Activated CD4-positive, alpha-beta memory T cell treated with anti-CD3 and anti-CD28 coated beads, Interleukin-2, amount 10 ng/mL, durations not matched to agents 7 days and 5 days (primary cell): ENCODE measurements at regions of chr20 and their contacts with region 1.

Region 1: DNA sequence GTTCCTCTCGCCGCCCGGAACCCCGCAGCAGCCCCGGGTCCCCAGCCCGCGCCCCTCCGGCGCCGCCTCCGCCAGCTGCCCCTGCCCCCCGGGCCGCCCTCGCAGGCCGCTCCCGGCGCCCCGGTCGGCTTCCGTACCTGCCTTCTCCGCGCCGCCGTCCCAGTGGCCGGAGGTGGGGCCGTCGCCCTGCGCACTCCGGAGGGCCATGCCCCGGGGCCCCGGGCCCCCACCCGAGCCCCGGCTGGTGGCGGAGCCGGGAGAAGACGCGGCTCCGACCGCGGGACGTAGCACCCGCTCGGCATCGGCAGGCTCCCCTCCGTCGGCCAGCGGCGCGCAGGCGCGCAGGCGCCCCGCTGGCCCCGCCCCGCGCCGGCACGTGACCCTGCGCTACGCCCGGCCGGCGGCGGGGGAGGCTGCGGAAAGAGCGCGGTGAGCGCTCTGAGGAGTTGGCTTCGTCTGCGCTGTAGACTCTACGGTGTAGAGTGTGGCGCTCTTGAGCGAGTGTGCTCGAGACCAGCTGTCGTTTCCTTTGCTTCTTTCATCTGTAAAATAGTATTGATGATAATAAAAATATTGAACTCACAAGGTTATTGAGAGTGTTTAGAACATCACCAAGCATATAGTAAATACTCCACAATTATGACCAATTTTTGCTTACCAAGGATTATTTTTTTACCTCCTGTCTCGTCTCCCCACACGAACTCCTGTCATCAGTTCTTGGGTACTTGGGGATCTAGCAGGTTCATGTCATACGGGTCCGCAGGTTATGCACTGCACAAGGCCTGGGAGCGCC is at the start of gene TBC1D20:
- DNase-seq: peak; percentile 88
- H3K4me3 Mint-ChIP-seq: peak within 1 kb of the TSS; percentile 100
- H3K27ac Mint-ChIP-seq: peak within 1 kb of the TSS; percentile 95
- H3K4me1 Mint-ChIP-seq: peaks cover 39% of the 10 kb centered on the region
- H3K27me3 Mint-ChIP-seq: peaks cover 4% of the 10 kb centered on the region
- total RNA-seq, gene TBC1D20: 27.0 to 28.1 TPM

Region 2: GRCh38 chr20:219290-220115 is 242.9 kb before region 1 on chr20:
- CTCF ChIA-PET with region 1: no interaction called
- POLR2A ChIA-PET with region 1: no interaction called
- DNase-seq: no peak
- H3K4me3 Mint-ChIP-seq: no peak overlapping the region
- H3K27ac Mint-ChIP-seq: no peak overlapping the region
- H3K4me1 Mint-ChIP-seq: no peaks in the 10 kb centered on the region
- H3K27me3 Mint-ChIP-seq: peaks cover 45% of the 10 kb centered on the region

Region 3: DNA sequence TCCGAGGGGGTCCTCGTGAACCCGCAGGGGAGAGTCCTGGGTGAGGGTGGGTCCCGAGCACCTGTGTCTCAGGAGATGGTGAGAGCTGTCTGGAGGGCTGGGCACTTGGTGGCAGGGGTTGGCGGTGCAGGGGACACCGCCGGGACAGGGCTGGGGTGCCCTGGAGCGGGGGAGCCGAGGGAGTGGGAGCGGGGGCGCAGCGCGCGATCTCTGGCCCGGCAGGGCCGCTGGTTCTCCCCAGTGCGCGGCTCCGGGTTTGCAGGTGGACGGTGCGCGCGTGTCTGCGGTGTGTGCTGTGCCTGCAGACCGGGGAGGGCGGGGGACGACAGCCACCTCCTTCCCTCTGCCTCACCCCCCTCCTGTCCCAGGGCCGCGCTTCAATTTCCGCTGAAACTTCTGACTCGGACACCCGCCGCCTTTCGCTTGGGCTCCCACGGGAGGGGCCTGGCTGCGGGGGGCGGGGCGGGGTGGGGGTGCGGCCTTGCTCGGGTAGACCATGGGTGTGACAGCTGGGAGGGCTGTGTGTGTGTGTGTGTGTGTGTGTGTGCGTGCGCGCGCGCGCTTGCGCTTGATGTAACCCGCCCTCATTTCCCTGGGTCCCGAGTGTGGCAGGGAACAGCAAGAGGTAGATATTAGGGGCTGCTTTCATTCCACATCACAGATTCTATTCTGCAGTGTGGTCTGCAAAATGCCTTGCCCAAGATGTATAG is 80.7 kb before region 1 on chr20:
- CTCF ChIA-PET with region 1: interaction called, 4 read pairs
- POLR2A ChIA-PET with region 1: interaction called, 13 read pairs
- DNase-seq: peak; percentile 88
- H3K4me3 Mint-ChIP-seq: peak overlapping the region; percentile 77
- H3K27ac Mint-ChIP-seq: peak overlapping the region; percentile 76
- H3K4me1 Mint-ChIP-seq: peaks cover 20% of the 10 kb centered on the region
- H3K27me3 Mint-ChIP-seq: no peaks in the 10 kb centered on the region

Region 4: DNA sequence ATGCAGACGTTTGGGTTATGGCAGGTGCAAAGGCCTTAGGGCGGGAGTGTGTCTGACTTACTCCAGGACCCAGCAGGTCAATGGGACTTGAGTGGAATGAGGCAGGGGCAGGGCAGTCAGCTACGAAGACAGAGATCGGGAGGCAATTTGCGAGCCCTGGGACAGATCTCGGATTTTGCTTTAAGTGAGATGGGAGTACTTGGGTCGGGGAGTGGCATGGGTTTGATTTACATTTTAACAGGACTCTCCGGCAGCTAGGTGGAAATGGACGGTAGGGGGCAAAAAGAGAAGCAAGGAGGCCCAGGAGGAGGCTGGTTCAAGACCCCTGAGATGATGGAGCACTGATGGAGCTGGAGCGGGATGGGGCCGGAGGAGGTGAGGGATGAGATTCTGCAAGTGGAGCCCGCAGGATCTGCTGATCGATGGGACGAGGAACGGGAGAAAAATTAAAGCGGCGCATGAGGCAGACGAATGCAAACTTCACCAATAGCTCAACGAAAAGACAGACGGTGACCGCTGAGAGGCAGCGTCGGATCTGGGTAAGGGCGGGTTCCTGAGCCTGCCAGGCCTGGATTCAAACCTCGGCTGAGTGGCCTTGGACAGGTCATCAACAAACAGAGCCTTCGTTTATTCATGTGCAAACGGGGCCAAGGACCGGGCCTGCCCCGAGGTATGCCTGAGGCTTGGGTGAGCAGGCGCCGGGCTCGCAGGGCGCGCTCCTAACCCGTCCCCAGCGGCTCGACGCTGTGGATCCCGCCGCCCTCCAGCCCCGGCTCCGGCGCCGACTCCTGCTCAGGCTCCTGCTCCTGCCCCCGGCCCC is 55.1 kb before region 1 on chr20:
- CTCF ChIA-PET with region 1: interaction called, 3 read pairs
- POLR2A ChIA-PET with region 1: interaction called, 12 read pairs
- DNase-seq: peak; percentile 77
- H3K4me3 Mint-ChIP-seq: peak overlapping the region; percentile 78
- H3K27ac Mint-ChIP-seq: peak overlapping the region; percentile 73
- H3K4me1 Mint-ChIP-seq: peaks cover 53% of the 10 kb centered on the region
- H3K27me3 Mint-ChIP-seq: no peaks in the 10 kb centered on the region

Region 5: GRCh38 chr20:438571-439469 is 23.6 kb before region 1 on chr20:
- CTCF ChIA-PET with region 1: interaction called, 11 read pairs
- POLR2A ChIA-PET with region 1: interaction called, 38 read pairs
- DNase-seq: peak; percentile 77
- H3K4me3 Mint-ChIP-seq: peak overlapping the region; percentile 62
- H3K27ac Mint-ChIP-seq: peak overlapping the region; percentile 83
- H3K4me1 Mint-ChIP-seq: peaks cover 60% of the 10 kb centered on the region
- H3K27me3 Mint-ChIP-seq: no peaks in the 10 kb centered on the region

Region 6: GRCh38 chr20:663315-664090 is 201.1 kb after region 1 on chr20:
- CTCF ChIA-PET with region 1: no interaction called
- POLR2A ChIA-PET with region 1: no interaction called
- DNase-seq: no peak
- H3K4me3 Mint-ChIP-seq: no peak overlapping the region
- H3K27ac Mint-ChIP-seq: no peak overlapping the region
- H3K4me1 Mint-ChIP-seq: peaks cover 5% of the 10 kb centered on the region
- H3K27me3 Mint-ChIP-seq: peaks cover 56% of the 10 kb centered on the region